Naive thymus-derived CD4-positive, alpha-beta T cell (primary cell): ENCODE measurements at regions of chr12 and their contacts with region 1.

Region 1: GRCh38 chr12:6752921-6753771 is at the start of gene MLF2:
- DNase-seq: peak; percentile 95 to 99 (median 97)
- ATAC-seq: peak; percentile 93
- H3K4me3 ChIP-seq: peak within 1 kb of the TSS; percentile 99
- H3K4me3 Mint-ChIP-seq: peak within 1 kb of the TSS; percentile 91 to 97 (median 96)
- H3K27ac ChIP-seq: peak within 1 kb of the TSS; percentile 97
- H3K27ac Mint-ChIP-seq: peak within 1 kb of the TSS; percentile 97 to 100 (median 99)
- H3K4me1 ChIP-seq: peaks cover 0 to 12% of the 10 kb centered on the region in 2 donors
- H3K4me1 Mint-ChIP-seq: peaks cover 10 to 44% (median 23%) of the 10 kb centered on the region in 7 donors
- H3K27me3 ChIP-seq: no peaks in the 10 kb centered on the region
- H3K27me3 Mint-ChIP-seq: no peaks in the 10 kb centered on the region
- total RNA-seq, gene MLF2: 84.6 to 141 (median 117) TPM

Region 2: DNA sequence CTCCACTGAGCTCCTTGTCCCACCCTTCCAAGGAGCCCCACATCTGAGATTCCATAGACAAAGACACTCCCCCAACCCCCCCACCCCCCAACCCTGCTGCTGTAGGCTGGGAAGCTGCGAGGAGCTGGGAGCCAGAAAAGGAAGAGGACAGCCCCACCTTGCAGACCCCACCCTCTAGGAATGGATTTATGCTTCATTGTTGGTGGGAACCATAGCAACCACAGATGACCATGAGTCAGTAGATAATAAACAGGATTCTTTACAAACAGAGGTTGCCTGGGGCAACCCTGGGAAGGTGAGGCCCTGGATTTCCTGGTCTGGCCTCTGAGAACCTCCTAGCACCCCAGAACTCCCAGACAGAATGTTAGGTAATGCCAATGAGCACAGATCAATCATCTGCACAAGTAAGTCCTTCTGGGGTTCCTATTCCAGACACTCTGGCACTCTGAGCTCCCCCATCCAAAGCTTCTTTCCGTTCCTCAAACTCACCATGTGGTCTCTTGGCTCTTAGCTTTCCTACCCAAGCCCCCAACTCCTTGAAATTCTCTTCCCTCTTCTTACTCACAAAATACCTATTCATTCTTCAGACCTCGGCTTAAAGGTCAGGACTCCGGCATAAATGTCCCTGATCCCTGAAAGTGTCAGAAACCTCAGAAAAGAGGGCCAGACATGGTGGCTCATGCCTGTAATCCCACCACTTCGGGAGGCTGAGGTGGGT is 457.9 kb before region 1 on chr12:
- CTCF ChIA-PET with region 1: no interaction called
- POLR2A ChIA-PET with region 1: no interaction called
- intact Hi-C with region 1: no loop called
- DNase-seq: no peak
- ATAC-seq: peak; percentile 16
- H3K4me3 ChIP-seq: no peak overlapping the region
- H3K4me3 Mint-ChIP-seq: no peak overlapping the region
- H3K27ac ChIP-seq: no peak overlapping the region
- H3K27ac Mint-ChIP-seq: peak overlapping the region in 1 of 9 donors; percentile 33
- H3K4me1 ChIP-seq: no peaks in the 10 kb centered on the region
- H3K4me1 Mint-ChIP-seq: peaks cover 0 to 3% (median 0%) of the 10 kb centered on the region in 7 donors
- H3K27me3 ChIP-seq: no peaks in the 10 kb centered on the region
- H3K27me3 Mint-ChIP-seq: peaks cover 0 to 12% (median 4%) of the 10 kb centered on the region in 5 donors

Region 3: GRCh38 chr12:6570264-6570887 is 182.8 kb before region 1 on chr12:
- CTCF ChIA-PET with region 1: no interaction called
- POLR2A ChIA-PET with region 1: no interaction called
- intact Hi-C with region 1: loop called in 1 of 2 experiments (anchors 1 kb)
- DNase-seq: peak in 1 of 9 donors; percentile 51
- ATAC-seq: no peak
- H3K4me3 ChIP-seq: no peak overlapping the region
- H3K4me3 Mint-ChIP-seq: peak overlapping the region in 7 of 10 donors; percentile 36 to 100 (median 94)
- H3K27ac ChIP-seq: no peak overlapping the region
- H3K27ac Mint-ChIP-seq: peak overlapping the region; percentile 47 to 99 (median 86)
- H3K4me1 ChIP-seq: peaks cover 8 to 18% of the 10 kb centered on the region in 2 donors
- H3K4me1 Mint-ChIP-seq: peaks cover 17 to 49% (median 44%) of the 10 kb centered on the region in 7 donors
- H3K27me3 ChIP-seq: no peaks in the 10 kb centered on the region
- H3K27me3 Mint-ChIP-seq: no peaks in the 10 kb centered on the region

Region 4: DNA sequence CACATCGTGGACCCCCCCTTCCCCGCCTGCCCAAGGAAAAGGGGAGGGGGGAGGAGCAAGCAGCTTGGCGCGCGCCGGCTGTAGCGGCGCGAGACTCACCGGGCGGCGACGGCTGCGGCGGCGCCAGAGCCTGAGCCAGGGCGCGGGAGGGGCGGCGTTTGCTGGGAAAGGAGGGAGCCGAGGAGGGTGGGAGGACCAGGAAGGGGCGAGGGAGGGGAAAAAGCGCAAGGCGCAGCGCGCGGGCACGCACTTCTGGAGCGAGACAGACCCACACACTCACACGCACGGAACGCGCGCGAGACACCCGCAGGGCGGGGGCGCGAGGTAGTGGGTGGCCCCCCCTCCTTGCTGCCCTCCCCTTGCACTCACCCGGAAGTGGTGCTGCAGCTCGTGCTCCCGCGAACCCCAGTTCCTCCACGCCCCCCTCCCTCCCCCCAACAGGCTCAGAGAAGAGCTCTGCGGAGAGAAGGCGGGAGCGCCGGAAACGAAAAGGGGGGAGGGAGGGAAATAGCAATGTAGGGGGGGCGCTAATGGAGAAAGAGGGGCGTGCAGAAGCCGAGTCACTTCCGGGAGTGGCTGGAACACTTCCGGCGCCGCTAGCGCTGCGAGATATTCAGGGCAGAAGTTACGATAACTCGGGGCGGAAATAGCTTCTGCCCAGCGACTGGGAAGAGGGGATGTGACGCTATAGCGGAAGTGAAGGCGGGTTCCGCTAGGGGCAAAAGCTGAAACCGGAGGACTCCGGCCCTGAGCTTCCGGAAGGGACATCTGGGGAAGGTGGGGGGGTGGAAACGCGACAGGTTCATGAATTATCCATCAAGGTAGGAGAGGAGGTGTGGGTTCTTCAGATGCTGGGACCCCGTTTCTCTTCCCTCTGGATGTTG is 63.9 kb before region 1 on chr12 and contains the start of gene ZNF384:
- CTCF ChIA-PET with region 1: interaction called, 7 read pairs
- POLR2A ChIA-PET with region 1: interaction called, 23 read pairs
- intact Hi-C with region 1: loop called (anchors 1 kb)
- DNase-seq: peak; percentile 83 to 98 (median 96)
- ATAC-seq: peak; percentile 91
- H3K4me3 ChIP-seq: peak within 1 kb of the TSS; percentile 84
- H3K4me3 Mint-ChIP-seq: peak within 1 kb of the TSS; percentile 85 to 100 (median 96)
- H3K27ac ChIP-seq: peak within 1 kb of the TSS; percentile 91
- H3K27ac Mint-ChIP-seq: peak within 1 kb of the TSS; percentile 93 to 99 (median 98)
- H3K4me1 ChIP-seq: peaks cover 17 to 19% of the 10 kb centered on the region in 2 donors
- H3K4me1 Mint-ChIP-seq: peaks cover 37 to 69% (median 53%) of the 10 kb centered on the region in 7 donors
- H3K27me3 ChIP-seq: no peaks in the 10 kb centered on the region
- H3K27me3 Mint-ChIP-seq: no peaks in the 10 kb centered on the region
- total RNA-seq, gene ZNF384: 62.8 to 98.2 (median 85.4) TPM

Region 5: GRCh38 chr12:6771091-6771495 is 17.9 kb after region 1 on chr12:
- CTCF ChIA-PET with region 1: interaction called, 22 read pairs
- POLR2A ChIA-PET with region 1: interaction called, 18 read pairs
- intact Hi-C with region 1: loop called in 1 of 2 experiments (anchors 1 kb)
- DNase-seq: no peak
- ATAC-seq: no peak
- H3K4me3 ChIP-seq: no peak overlapping the region
- H3K4me3 Mint-ChIP-seq: peak overlapping the region in 5 of 10 donors; percentile 34 to 87 (median 73)
- H3K27ac ChIP-seq: no peak overlapping the region
- H3K27ac Mint-ChIP-seq: peak overlapping the region in 3 of 9 donors; percentile 65 to 91 (median 76)
- H3K4me1 ChIP-seq: peaks cover 17 to 35% of the 10 kb centered on the region in 2 donors
- H3K4me1 Mint-ChIP-seq: peaks cover 32 to 72% (median 45%) of the 10 kb centered on the region in 7 donors
- H3K27me3 ChIP-seq: no peaks in the 10 kb centered on the region
- H3K27me3 Mint-ChIP-seq: peaks cover 0 to 53% (median 17%) of the 10 kb centered on the region in 5 donors

Region 6: GRCh38 chr12:6825398-6826124 is 72.4 kb after region 1 on chr12:
- CTCF ChIA-PET with region 1: interaction called, 94 read pairs
- POLR2A ChIA-PET with region 1: interaction called, 91 read pairs
- intact Hi-C with region 1: loop called (anchors 1 kb)
- DNase-seq: peak; percentile 69 to 89 (median 78)
- ATAC-seq: peak; percentile 79
- H3K4me3 ChIP-seq: no peak overlapping the region
- H3K4me3 Mint-ChIP-seq: peak overlapping the region in 7 of 10 donors; percentile 5 to 65 (median 35)
- H3K27ac ChIP-seq: no peak overlapping the region
- H3K27ac Mint-ChIP-seq: peak overlapping the region in 4 of 9 donors; percentile 22 to 84 (median 53)
- H3K4me1 ChIP-seq: peaks cover 4 to 13% of the 10 kb centered on the region in 2 donors
- H3K4me1 Mint-ChIP-seq: peaks cover 27 to 42% (median 39%) of the 10 kb centered on the region in 7 donors
- H3K27me3 ChIP-seq: peaks cover 0 to 12% of the 10 kb centered on the region in 2 donors
- H3K27me3 Mint-ChIP-seq: peaks cover 9 to 63% (median 26%) of the 10 kb centered on the region in 5 donors

Region 7: GRCh38 chr12:6890789-6891645 is 137.9 kb after region 1 on chr12:
- CTCF ChIA-PET with region 1: no interaction called
- POLR2A ChIA-PET with region 1: no interaction called
- intact Hi-C with region 1: loop called in 1 of 2 experiments (anchors 1 kb)
- DNase-seq: peak; percentile 95 to 100 (median 97)
- ATAC-seq: peak; percentile 96
- H3K4me3 ChIP-seq: peak overlapping the region; percentile 93
- H3K4me3 Mint-ChIP-seq: peak overlapping the region; percentile 78 to 86 (median 84)
- H3K27ac ChIP-seq: peak overlapping the region; percentile 86
- H3K27ac Mint-ChIP-seq: peak overlapping the region; percentile 82 to 94 (median 90)
- H3K4me1 ChIP-seq: peaks cover 6 to 10% of the 10 kb centered on the region in 2 donors
- H3K4me1 Mint-ChIP-seq: peaks cover 0 to 31% (median 11%) of the 10 kb centered on the region in 7 donors
- H3K27me3 ChIP-seq: no peaks in the 10 kb centered on the region
- H3K27me3 Mint-ChIP-seq: no peaks in the 10 kb centered on the region